ENCODE measurements at regions of chr7 and their contacts with region 1.

Region 1: DNA sequence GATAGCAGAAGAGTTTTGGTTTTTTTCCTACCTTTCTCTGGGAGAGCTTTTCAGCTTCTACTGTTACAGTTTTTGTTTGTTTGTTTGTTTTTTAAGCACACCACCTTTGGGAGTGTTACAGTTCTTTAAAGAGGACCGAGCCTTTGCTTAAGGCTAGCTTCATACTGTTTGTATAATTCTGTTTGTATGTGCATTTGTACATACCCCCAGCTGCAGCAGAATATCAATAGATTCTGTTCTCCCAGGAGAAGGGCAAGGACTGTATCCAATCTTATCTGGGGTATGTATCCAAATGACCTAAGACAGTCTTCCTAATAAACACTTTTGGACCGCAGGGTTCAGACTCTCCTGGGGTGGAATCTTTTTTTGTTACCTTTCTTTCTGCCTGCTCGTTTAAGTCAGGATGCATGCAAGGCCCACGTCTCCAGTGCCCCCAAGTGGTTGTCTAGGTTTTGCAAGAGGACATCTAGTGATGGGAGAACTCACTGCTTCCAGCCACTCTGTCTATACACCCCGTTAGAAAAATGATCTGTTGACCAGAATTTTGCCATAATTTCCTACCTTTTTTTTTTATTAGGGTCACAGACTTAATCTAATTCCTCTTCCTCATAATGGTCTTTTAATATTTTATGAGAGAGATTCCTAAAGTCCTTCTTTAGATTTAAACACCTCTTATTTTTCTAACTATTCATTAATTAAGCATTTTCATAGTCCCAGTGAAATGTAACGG is 23.9 kb downstream of the NRF1 start:
- DNase-seq: peak; percentile 25 to 63
- ATAC-seq: peak; percentile 34 to 88 (median 84)
- H3K4me3 ChIP-seq: no peak overlapping the region
- H3K27ac ChIP-seq: no peak overlapping the region
- H3K4me1 ChIP-seq: peaks cover 0 to 27% (median 8%) of the 10 kb centered on the region in 9 donors
- H3K27me3 ChIP-seq: no peaks in the 10 kb centered on the region
- CTCF ChIP-seq: peak; percentile 33 to 87 (median 75)

Region 2: DNA sequence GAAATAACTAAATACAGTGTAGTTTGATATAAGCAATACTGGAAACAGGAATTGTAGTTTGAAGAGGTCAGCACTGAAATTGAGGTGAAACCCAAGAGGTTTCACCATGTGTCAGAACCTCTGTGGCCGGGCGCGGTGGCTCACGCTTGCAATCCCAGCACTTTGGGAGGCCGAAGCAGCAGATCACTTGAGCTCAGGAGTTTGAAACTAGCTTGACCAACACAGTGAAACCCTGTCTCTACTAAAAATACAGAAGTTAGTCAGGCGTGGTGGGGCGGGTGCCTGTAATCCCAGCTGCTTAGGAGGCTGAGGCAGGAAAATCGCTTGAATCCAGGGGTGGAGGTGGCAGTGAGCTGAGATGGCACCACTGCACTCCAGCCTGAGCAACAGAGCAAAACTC is 396.9 kb before region 1 on chr7:
- intact Hi-C with region 1: loop called in 1 of 10 experiments (anchors 10 kb)
- DNase-seq: no peak
- ATAC-seq: no peak
- H3K4me3 ChIP-seq: no peak overlapping the region
- H3K27ac ChIP-seq: no peak overlapping the region
- H3K4me1 ChIP-seq: no peaks in the 10 kb centered on the region
- H3K27me3 ChIP-seq: no peaks in the 10 kb centered on the region
- CTCF ChIP-seq: no peak

Region 3: GRCh38 chr7:129367700-129368388 is 267.6 kb before region 1 on chr7:
- intact Hi-C with region 1: loop called in 6 of 10 experiments (anchors 5 to 10 kb)
- DNase-seq: peak; percentile 63
- ATAC-seq: peak; percentile 79 to 92 (median 87)
- H3K4me3 ChIP-seq: peak overlapping the region in 4 of 10 donors; percentile 3 to 29 (median 11)
- H3K27ac ChIP-seq: no peak overlapping the region
- H3K4me1 ChIP-seq: peaks cover 0 to 18% (median 11%) of the 10 kb centered on the region in 9 donors
- H3K27me3 ChIP-seq: no peaks in the 10 kb centered on the region
- CTCF ChIP-seq: peak; percentile 71 to 96 (median 89)

Region 4: GRCh38 chr7:129494041-129494440 is 141.4 kb before region 1 on chr7:
- intact Hi-C with region 1: loop called in 3 of 10 experiments (anchors 10 kb)
- DNase-seq: no peak
- ATAC-seq: no peak
- H3K4me3 ChIP-seq: no peak overlapping the region
- H3K27ac ChIP-seq: no peak overlapping the region
- H3K4me1 ChIP-seq: peaks cover 0 to 10% (median 0%) of the 10 kb centered on the region in 9 donors
- H3K27me3 ChIP-seq: no peaks in the 10 kb centered on the region
- CTCF ChIP-seq: no peak

Region 5: DNA sequence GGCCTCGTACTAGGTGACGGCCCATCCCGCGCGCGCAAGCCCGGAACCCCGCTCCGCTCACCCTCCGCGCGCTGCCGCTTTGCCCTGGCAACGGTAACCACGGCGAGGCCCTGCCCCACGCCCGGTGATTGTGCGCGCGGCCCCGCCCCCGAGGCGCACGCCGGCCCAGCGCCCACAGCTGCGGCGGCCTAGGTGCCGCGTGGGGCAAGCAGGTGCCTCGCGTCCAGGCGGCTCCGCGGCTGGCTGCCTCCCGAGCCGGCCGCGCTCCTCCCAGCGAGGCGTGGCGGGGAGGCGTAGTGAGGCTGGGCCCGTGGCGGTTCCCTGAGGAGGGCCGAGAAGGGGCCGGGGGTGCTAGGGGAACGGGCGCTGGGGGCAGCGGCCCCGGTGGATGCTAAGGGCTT is 133.1 kb before region 1 on chr7 and contains the start of gene SMKR1:
- intact Hi-C with region 1: loop called in 5 of 10 experiments (anchors 10 kb)
- DNase-seq: peak; percentile 59 to 74
- ATAC-seq: peak; percentile 81 to 93 (median 88)
- H3K4me3 ChIP-seq: peak within 1 kb of the TSS; percentile 28 to 63 (median 56)
- H3K27ac ChIP-seq: no peak within 1 kb of the TSS
- H3K4me1 ChIP-seq: peaks cover 5 to 12% (median 8%) of the 10 kb centered on the region in 9 donors
- H3K27me3 ChIP-seq: peaks cover 0 to 30% (median 9%) of the 10 kb centered on the region in 7 donors
- CTCF ChIP-seq: no peak
- total RNA-seq, gene SMKR1: not detected

Region 6: DNA sequence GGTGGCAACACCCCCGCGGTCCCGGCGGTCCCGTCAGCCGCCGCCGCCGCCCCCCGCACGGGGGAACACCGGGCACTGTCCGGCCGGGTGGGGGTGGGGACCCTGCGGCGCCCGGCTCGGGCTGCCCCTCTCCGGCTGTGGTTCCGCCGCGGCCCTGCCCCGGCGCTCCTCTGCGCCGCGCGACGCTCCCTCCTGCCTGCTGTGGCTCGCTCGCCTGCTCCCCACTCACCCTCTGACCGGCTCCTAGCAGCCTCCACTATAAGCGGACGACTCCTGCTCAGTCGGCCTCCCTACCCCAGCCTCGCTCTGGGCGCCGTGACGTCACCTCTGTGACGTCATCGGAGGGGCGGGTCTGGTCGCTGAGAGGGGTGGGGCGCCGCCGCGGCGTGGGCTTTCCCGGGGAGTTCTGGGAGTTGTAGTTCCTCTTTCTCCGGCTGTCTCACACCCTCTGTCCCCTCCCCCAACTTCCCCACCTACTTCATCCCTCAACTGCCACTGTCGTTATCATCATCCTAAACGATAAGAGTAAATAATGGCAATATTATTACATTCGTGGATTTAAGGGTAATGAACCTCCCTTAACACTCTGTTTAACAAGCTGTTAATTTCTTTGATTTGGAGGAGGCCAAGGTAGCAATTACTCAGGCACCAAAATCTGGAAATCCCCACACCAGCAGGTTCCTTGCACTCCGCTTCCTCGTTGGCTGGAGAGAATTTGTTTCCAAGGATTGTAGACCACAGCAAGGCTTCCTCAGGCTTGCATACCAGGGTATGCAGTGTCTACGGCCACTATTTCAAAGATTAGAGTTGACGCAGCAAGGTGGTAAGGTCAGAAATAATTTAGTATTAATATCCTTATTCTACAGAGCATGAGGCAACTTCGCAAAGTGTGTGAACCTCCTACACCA is 317.4 kb after region 1 on chr7 and contains the start of gene UBE2H:
- intact Hi-C with region 1: no loop called
- DNase-seq: peak; percentile 92 to 94
- ATAC-seq: peak; percentile 83 to 93 (median 92)
- H3K4me3 ChIP-seq: peak within 1 kb of the TSS; percentile 80 to 99 (median 89)
- H3K27ac ChIP-seq: peak within 1 kb of the TSS; percentile 90 to 99 (median 96)
- H3K4me1 ChIP-seq: peaks cover 0 to 38% (median 24%) of the 10 kb centered on the region in 9 donors
- H3K27me3 ChIP-seq: no peaks in the 10 kb centered on the region
- CTCF ChIP-seq: no peak
- total RNA-seq, gene UBE2H: 73.5 to 222 (median 170) TPM

Measured in heart right ventricle (tissue), 16 donors.